ENCODE measurements at regions of chr1 and their contacts with region 1.

Region 1: GRCh38 chr1:20640183-20640597 is 6.9 kb downstream of the PINK1 start:
- DNase-seq: peak in 1 of 5 donors; percentile 36
- ATAC-seq: peak in 3 of 4 donors; percentile 53 to 61 (median 57)
- H3K4me3 ChIP-seq: no peak overlapping the region
- H3K27ac ChIP-seq: no peak overlapping the region
- H3K4me1 ChIP-seq: peaks cover 0 to 17% (median 5%) of the 10 kb centered on the region in 12 donors
- H3K27me3 ChIP-seq: no peaks in the 10 kb centered on the region
- CTCF ChIP-seq: peak; percentile 65 to 91 (median 81)
- POLR2A ChIP-seq: no peak

Region 2: GRCh38 chr1:20574686-20575540 is 65.3 kb before region 1 on chr1:
- intact Hi-C with region 1: loop called in 3 of 10 experiments (anchors 2 to 5 kb)
- DNase-seq: peak; percentile 84 to 93 (median 86)
- ATAC-seq: peak; percentile 88 to 98 (median 98)
- H3K4me3 ChIP-seq: no peak overlapping the region
- H3K27ac ChIP-seq: no peak overlapping the region
- H3K4me1 ChIP-seq: peaks cover 0 to 4% (median 0%) of the 10 kb centered on the region in 12 donors
- H3K27me3 ChIP-seq: peaks cover 0 to 3% (median 0%) of the 10 kb centered on the region in 9 donors
- CTCF ChIP-seq: peak; percentile 58 to 88 (median 73)
- POLR2A ChIP-seq: no peak

Region 3: DNA sequence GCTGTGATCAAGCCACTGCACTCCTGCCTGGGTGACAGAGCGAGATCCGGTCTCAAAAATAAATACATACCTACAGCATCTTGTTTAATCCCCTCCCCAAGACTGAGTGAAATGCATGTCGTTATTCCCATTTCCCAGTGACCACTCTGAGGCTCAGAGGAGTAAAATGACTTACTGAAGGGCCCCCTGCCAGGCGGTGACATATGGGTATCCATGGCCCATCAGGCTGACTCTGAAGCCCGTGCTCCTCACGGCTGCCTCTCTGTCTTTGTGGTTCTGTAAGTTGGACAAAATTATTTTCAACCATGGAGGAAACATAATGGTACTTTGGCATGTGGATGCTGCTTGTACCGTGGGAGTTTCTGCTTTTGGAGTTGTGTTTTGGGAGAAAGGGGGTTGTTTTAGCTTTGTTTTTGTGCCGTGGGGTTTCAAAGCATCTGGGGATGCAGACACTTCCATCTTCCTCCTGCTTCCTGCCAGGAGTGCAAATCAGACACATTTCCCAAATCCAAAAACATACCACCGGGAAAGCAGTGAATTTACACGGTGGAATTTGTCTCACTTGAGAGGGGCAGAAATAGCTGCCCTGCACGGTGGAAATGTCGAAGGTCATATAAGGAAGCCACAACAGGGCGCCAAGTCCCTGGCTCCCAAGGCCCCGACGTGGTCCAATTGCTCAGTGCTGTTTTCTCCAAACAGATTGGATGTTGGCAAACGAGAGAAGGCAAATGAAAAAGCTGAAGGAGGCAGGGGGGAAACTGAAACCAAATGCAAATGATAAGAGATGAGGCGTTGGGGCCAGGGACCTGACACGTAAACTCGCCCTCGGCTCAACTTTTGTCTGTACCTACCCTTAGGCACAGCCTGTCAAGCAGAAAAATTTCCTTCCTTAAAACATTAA is 24.0 kb before region 1 on chr1:
- intact Hi-C with region 1: no loop called
- DNase-seq: peak in 2 of 5 donors; percentile 45 to 56
- ATAC-seq: peak in 2 of 4 donors; percentile 63 to 66
- H3K4me3 ChIP-seq: peak overlapping the region in 2 of 12 donors; percentile 8 to 19
- H3K27ac ChIP-seq: peak overlapping the region in 10 of 12 donors; percentile 6 to 67 (median 52)
- H3K4me1 ChIP-seq: peaks cover 0 to 35% (median 13%) of the 10 kb centered on the region in 12 donors
- H3K27me3 ChIP-seq: no peaks in the 10 kb centered on the region
- CTCF ChIP-seq: no peak
- POLR2A ChIP-seq: no peak

Region 4: DNA sequence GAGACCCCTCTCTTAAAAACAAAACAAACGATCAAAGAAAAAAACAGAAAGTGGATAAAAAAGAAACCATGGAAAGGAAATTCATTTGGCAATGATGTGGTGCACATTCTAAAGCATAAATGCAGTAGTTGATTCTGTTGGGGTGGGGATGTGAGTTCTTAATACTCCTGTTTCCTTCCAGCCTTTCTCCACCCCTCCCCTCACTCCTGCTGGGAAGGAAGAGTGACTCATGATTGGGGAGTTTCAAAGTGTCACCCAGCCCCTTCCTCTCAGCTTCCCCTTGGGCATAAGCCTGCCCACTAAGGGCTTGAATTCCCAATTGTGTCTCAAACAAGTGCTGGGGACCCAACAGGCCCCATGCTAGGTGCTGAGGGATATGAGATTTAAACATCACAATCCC is 13.7 kb before region 1 on chr1:
- intact Hi-C with region 1: no loop called
- DNase-seq: no peak
- ATAC-seq: no peak
- H3K4me3 ChIP-seq: no peak overlapping the region
- H3K27ac ChIP-seq: no peak overlapping the region
- H3K4me1 ChIP-seq: no peaks in the 10 kb centered on the region
- H3K27me3 ChIP-seq: no peaks in the 10 kb centered on the region
- CTCF ChIP-seq: no peak
- POLR2A ChIP-seq: no peak